Activated CD4-positive, alpha-beta T cell treated with anti-CD3 and anti-CD28 coated beads, Interleukin-2, amount 10 ng/mL, durations not matched to agents 24 days and 14 days (primary cell): ENCODE measurements at regions of chr1 and their contacts with region 1.

Region 1: DNA sequence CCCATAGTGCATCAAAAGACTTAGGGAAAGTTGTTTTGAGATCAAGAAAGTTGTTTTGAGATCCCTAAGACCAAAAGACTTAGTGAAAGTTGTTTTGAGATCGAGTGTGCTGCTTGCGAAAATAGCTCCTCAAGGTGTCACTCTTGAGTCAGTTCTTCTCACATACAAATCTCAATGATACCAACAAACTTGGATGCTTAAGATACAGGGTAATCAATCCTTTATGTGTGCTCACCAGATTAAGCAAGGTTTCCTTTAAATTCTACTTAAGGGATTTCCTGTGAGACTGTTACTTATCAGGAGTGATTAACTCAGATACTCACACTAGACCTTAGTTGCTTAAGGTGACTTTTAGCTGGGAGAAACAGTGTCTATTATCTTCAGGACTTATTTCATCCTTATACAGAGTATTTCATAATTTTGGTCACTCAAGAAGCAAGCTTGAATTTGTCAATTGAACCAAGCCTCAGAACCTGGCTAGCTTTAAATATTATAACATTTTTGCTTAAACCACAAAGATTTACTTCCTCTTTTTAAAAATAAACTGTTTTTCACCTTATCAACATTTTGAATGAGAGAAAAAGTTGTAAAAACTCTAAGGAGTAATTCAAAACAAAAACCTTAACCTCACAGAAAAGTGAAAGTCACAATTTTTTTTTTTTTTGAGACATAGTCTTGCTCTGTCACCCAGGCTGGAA is 8.0 kb upstream of the RLF start:
- DNase-seq: peak; percentile 83
- H3K4me3 Mint-ChIP-seq: no peak overlapping the region
- H3K27ac Mint-ChIP-seq: no peak overlapping the region
- H3K4me1 Mint-ChIP-seq: peaks cover 6% of the 10 kb centered on the region
- H3K27me3 Mint-ChIP-seq: peaks cover 9% of the 10 kb centered on the region

Region 2: GRCh38 chr1:40185951-40186864 is 33.0 kb after region 1 on chr1:
- intact Hi-C with region 1: loop called (anchors 5 kb)
- DNase-seq: peak; percentile 82
- H3K4me3 Mint-ChIP-seq: peak overlapping the region; percentile 64
- H3K27ac Mint-ChIP-seq: peak overlapping the region; percentile 85
- H3K4me1 Mint-ChIP-seq: peaks cover 47% of the 10 kb centered on the region
- H3K27me3 Mint-ChIP-seq: no peaks in the 10 kb centered on the region

Region 3: GRCh38 chr1:40315239-40315794 is 162.1 kb after region 1 on chr1:
- intact Hi-C with region 1: loop called (anchors 1 kb)
- DNase-seq: peak; percentile 95
- H3K4me3 Mint-ChIP-seq: peak overlapping the region; percentile 80
- H3K27ac Mint-ChIP-seq: peak overlapping the region; percentile 41
- H3K4me1 Mint-ChIP-seq: peaks cover 47% of the 10 kb centered on the region
- H3K27me3 Mint-ChIP-seq: peaks cover 24% of the 10 kb centered on the region

Region 4: GRCh38 chr1:40404670-40405462 is 251.6 kb after region 1 on chr1:
- intact Hi-C with region 1: loop called (anchors 2 kb)
- DNase-seq: peak; percentile 82
- H3K4me3 Mint-ChIP-seq: peak overlapping the region; percentile 77
- H3K27ac Mint-ChIP-seq: peak overlapping the region; percentile 95
- H3K4me1 Mint-ChIP-seq: peaks cover 50% of the 10 kb centered on the region
- H3K27me3 Mint-ChIP-seq: no peaks in the 10 kb centered on the region